PC-9 (cell line): ENCODE measurements at regions of chr1 and their contacts with region 1.

Region 1: GRCh38 chr1:35005711-35006110 is 20.6 kb upstream of the TMEM35B start:
- DNase-seq: no peak
- H3K4me3 ChIP-seq: no peak overlapping the region
- H3K27ac ChIP-seq: no peak overlapping the region
- H3K4me1 ChIP-seq: no peaks in the 10 kb centered on the region
- H3K27me3 ChIP-seq: no peaks in the 10 kb centered on the region
- CTCF ChIP-seq: no peak

Region 2: GRCh38 chr1:35122311-35122710 is 116.6 kb after region 1 on chr1:
- CTCF ChIA-PET with region 1: no interaction called
- POLR2A ChIA-PET with region 1: no interaction called
- intact Hi-C with region 1: no loop called
- DNase-seq: no peak
- H3K4me3 ChIP-seq: no peak overlapping the region
- H3K27ac ChIP-seq: no peak overlapping the region
- H3K4me1 ChIP-seq: no peaks in the 10 kb centered on the region
- H3K27me3 ChIP-seq: no peaks in the 10 kb centered on the region
- CTCF ChIP-seq: no peak

Region 3: GRCh38 chr1:35737120-35737519 is 731.4 kb after region 1 on chr1:
- CTCF ChIA-PET with region 1: interaction called, 16 read pairs
- POLR2A ChIA-PET with region 1: no interaction called
- intact Hi-C with region 1: no loop called
- DNase-seq: no peak
- H3K4me3 ChIP-seq: no peak overlapping the region
- H3K27ac ChIP-seq: no peak overlapping the region
- H3K4me1 ChIP-seq: no peaks in the 10 kb centered on the region
- H3K27me3 ChIP-seq: no peaks in the 10 kb centered on the region
- CTCF ChIP-seq: no peak